ENCODE measurements at regions of chr11 and their contacts with region 1.

Region 1: GRCh38 chr11:62880803-62881578 is at the start of gene SLC3A2:
- DNase-seq: peak; percentile 61 to 94 (median 82)
- ATAC-seq: peak; percentile 74
- H3K4me3 ChIP-seq: peak within 1 kb of the TSS; percentile 99
- H3K4me3 Mint-ChIP-seq: peak within 1 kb of the TSS; percentile 93
- H3K27ac ChIP-seq: peak within 1 kb of the TSS; percentile 95 to 98
- H3K27ac Mint-ChIP-seq: peak within 1 kb of the TSS; percentile 100
- H3K4me1 ChIP-seq: peaks cover 47% of the 10 kb centered on the region
- H3K4me1 Mint-ChIP-seq: peaks cover 52% of the 10 kb centered on the region
- H3K27me3 ChIP-seq: no peaks in the 10 kb centered on the region
- H3K27me3 Mint-ChIP-seq: no peaks in the 10 kb centered on the region
- CTCF ChIP-seq: peak; percentile 86
- total RNA-seq, gene SLC3A2: 231 to 234 TPM

Region 2: DNA sequence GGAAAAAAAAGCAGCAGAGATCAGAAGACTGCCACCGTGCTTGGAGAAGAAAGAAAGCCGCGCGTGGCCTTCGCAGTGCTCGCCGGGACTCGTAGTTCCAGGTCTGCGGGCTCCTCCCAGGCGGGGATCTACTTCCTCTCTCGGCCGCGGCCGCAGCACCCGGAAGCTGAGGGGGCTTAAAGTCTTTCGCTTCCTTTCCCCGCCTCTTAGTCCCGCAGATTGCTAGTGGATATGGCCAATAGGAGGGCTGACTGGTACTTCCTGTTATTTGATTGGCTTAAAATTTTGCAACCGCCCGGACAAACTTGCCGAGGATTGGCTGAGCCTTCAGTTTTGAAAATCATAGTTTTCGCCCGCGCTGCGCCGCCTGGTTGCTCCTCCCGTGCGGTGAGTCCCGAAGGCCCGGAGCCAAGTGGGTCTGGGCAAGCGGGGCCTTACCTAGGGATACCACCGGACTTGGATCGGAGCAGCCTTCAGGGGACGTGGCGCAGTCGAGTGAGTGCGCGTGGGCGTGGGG is 757.3 kb before region 1 on chr11 and contains the start of gene INCENP:
- CTCF ChIA-PET with region 1: no interaction called
- POLR2A ChIA-PET with region 1: no interaction called
- intact Hi-C with region 1: loop called in 1 of 2 experiments (anchors 5 kb)
- DNase-seq: peak; percentile 87 to 98 (median 92)
- ATAC-seq: peak; percentile 99
- H3K4me3 ChIP-seq: peak within 1 kb of the TSS; percentile 87
- H3K4me3 Mint-ChIP-seq: peak within 1 kb of the TSS; percentile 97
- H3K27ac ChIP-seq: no peak within 1 kb of the TSS
- H3K27ac Mint-ChIP-seq: peak within 1 kb of the TSS; percentile 89
- H3K4me1 ChIP-seq: peaks cover 17% of the 10 kb centered on the region
- H3K4me1 Mint-ChIP-seq: peaks cover 30% of the 10 kb centered on the region
- H3K27me3 ChIP-seq: no peaks in the 10 kb centered on the region
- H3K27me3 Mint-ChIP-seq: no peaks in the 10 kb centered on the region
- CTCF ChIP-seq: no peak
- total RNA-seq, gene INCENP: 12.6 to 16.3 TPM

Region 3: DNA sequence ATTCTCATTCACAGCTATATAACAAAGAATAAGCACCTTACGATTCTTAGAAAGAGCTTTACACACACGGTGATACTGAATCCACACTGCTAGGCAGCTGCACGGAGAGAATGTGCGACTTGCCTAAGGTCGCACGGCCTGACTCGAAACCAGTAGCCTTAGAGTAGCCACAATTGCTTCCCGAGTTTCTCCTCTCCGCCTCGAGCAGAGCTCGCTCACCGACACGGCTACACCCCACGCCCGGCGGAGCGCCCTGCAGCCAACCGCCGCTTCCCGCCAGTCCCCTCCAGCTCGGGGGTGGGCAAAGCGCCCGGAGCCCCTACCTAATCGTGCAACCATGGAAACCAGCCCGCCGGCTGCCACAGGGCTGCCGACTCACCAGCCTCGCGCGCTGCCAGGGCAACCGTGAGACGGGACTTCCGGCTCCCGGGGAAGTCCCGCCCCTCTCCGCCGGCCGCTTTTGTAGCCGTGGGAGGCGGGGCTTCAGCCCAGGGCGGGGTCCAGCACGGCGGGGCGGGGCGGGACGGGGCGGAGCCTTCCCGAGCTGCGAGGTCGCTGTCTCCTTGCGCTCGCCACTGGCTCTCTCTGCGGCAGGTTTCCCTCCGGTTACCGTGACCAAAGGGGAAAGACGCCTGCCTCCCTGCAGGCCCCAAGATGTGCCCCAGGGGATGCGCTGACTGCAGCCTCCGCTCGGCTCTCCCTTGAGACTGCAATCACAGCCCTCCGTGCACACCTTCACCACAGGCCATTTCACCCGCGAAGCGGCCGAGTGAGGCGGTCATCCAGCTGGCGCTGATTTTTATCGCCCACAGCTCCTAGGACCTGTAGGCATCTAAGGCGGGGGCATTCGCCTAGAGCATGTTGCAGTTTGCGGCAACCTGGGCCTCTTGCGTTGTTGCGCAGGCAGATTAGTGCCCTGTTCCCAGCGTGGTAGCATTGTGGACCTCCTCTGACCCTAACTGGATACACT is 174.8 kb before region 1 on chr11:
- CTCF ChIA-PET with region 1: interaction called, 3 read pairs
- POLR2A ChIA-PET with region 1: interaction called, 14 read pairs
- intact Hi-C with region 1: no loop called
- DNase-seq: peak; percentile 90 to 97 (median 94)
- ATAC-seq: peak; percentile 62
- H3K4me3 ChIP-seq: peak overlapping the region; percentile 79
- H3K4me3 Mint-ChIP-seq: peak overlapping the region; percentile 86
- H3K27ac ChIP-seq: peak overlapping the region; percentile 65 to 84
- H3K27ac Mint-ChIP-seq: peak overlapping the region; percentile 92
- H3K4me1 ChIP-seq: peaks cover 49% of the 10 kb centered on the region
- H3K4me1 Mint-ChIP-seq: peaks cover 42% of the 10 kb centered on the region
- H3K27me3 ChIP-seq: no peaks in the 10 kb centered on the region
- H3K27me3 Mint-ChIP-seq: no peaks in the 10 kb centered on the region
- CTCF ChIP-seq: no peak

Region 4: GRCh38 chr11:62771144-62772021 is 109.6 kb before region 1 on chr11 and contains the start of gene TAF6L:
- CTCF ChIA-PET with region 1: interaction called, 7 read pairs
- POLR2A ChIA-PET with region 1: interaction called, 6 read pairs
- intact Hi-C with region 1: loop called in 1 of 2 experiments (anchors 5 kb)
- DNase-seq: peak; percentile 81 to 95 (median 88)
- ATAC-seq: peak; percentile 76
- H3K4me3 ChIP-seq: peak within 1 kb of the TSS; percentile 76
- H3K4me3 Mint-ChIP-seq: peak within 1 kb of the TSS; percentile 97
- H3K27ac ChIP-seq: peak within 1 kb of the TSS; percentile 79 to 88
- H3K27ac Mint-ChIP-seq: peak within 1 kb of the TSS; percentile 97
- H3K4me1 ChIP-seq: peaks cover 27% of the 10 kb centered on the region
- H3K4me1 Mint-ChIP-seq: peaks cover 24% of the 10 kb centered on the region
- H3K27me3 ChIP-seq: no peaks in the 10 kb centered on the region
- H3K27me3 Mint-ChIP-seq: no peaks in the 10 kb centered on the region
- CTCF ChIP-seq: no peak
- total RNA-seq, gene TAF6L: 11.5 to 11.8 TPM

Region 5: DNA sequence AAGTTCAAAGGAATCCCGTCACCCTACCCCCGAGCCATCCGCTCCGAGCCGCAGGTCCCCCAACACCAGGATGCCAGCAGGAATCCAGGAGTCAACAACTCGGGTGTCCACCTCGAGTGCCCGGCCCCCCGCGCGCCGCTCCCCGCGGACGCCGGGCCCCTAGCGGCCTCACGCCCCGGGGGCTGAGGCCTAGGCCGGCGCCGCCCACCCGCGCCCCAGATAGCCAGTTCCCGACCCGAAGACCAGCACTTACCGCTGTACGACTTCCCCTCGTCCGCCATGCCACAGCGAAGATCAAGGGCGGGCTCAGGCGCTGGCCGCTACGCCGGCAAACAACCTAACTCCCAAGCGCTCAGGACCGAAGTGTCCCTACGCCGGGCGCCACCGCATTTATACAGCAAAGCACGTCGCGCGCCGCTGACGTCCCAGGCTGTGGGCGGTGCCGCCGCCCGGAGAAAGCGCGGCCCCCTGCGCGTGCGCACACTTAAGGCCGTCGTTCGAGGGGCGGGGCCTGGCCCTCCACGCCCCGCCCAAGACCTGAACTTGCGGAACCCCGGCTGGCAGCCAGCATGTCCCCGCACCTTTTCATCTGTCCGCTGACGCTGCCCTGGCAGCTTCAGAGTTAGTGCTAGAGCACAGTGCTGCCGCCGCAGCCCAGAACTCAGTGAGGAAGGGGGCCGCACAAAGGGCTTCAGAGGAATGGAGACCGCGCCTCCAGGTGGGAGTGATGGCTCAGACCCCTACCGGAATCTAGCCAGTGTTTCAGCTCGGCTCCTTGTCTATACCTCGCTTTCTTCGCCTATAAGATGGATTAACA is 75.7 kb before region 1 on chr11 and contains the start of gene NXF1:
- CTCF ChIA-PET with region 1: interaction called, 10 read pairs
- POLR2A ChIA-PET with region 1: interaction called, 5 read pairs
- intact Hi-C with region 1: no loop called
- DNase-seq: peak; percentile 88 to 98 (median 96)
- ATAC-seq: peak; percentile 82
- H3K4me3 ChIP-seq: peak within 1 kb of the TSS; percentile 70
- H3K4me3 Mint-ChIP-seq: peak within 1 kb of the TSS; percentile 98
- H3K27ac ChIP-seq: peak within 1 kb of the TSS; percentile 60 to 83
- H3K27ac Mint-ChIP-seq: peak within 1 kb of the TSS; percentile 97
- H3K4me1 ChIP-seq: peaks cover 36% of the 10 kb centered on the region
- H3K4me1 Mint-ChIP-seq: peaks cover 41% of the 10 kb centered on the region
- H3K27me3 ChIP-seq: no peaks in the 10 kb centered on the region
- H3K27me3 Mint-ChIP-seq: no peaks in the 10 kb centered on the region
- CTCF ChIP-seq: no peak
- total RNA-seq, gene NXF1: 343 to 358 TPM

Region 6: GRCh38 chr11:62855571-62856332 is 25.2 kb before region 1 on chr11:
- CTCF ChIA-PET with region 1: interaction called, 29 read pairs
- POLR2A ChIA-PET with region 1: interaction called, 78 read pairs
- intact Hi-C with region 1: no loop called
- DNase-seq: peak; percentile 96 to 99 (median 98)
- ATAC-seq: peak; percentile 92
- H3K4me3 ChIP-seq: peak overlapping the region; percentile 79
- H3K4me3 Mint-ChIP-seq: peak overlapping the region; percentile 98
- H3K27ac ChIP-seq: peak overlapping the region; percentile 66 to 72
- H3K27ac Mint-ChIP-seq: peak overlapping the region; percentile 90
- H3K4me1 ChIP-seq: peaks cover 41% of the 10 kb centered on the region
- H3K4me1 Mint-ChIP-seq: peaks cover 63% of the 10 kb centered on the region
- H3K27me3 ChIP-seq: no peaks in the 10 kb centered on the region
- H3K27me3 Mint-ChIP-seq: no peaks in the 10 kb centered on the region
- CTCF ChIP-seq: no peak